A549 (cell line): ENCODE measurements at regions of chr19 and their contacts with region 1.

Region 1: DNA sequence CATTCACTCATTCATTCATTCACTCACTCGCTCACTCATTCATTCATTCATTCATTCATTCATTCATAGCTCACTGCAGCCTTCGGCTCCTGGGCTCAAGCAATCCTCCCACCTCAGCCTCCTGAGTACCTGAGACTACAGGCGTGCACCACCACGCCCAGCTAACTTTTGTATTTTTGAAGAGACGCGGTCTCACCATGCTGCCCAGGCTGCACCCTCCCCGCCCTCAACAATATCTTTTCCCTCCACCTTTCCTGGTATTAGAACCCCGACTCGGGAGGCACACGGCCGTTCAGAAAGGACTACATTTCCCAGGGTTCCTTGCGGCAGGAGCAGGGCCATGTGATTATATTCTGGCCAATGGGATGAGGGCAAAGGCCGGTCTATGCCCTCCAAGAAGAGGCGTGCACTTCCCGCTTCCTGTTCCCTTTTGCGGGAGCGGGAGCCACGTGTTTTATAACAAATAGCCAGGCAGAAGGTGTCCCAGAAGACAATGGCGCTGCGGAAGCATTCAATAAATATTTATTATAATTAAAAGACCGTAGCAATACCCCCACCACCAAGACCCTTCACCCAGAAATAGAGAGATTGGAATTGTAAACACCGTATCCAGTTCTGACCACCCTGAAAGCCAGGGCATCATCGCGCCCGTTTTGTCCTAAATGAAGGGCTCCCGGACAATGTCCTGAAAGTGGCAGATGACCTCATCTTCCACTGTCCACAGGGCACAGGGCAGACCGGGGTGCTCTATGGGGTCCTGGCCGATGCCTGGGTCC is 15.9 kb downstream of the TICAM1 start:
- DNase-seq: peak; percentile 91 to 93
- ATAC-seq: peak; percentile 59 to 77; a peak in 4 of 6 replicates
- H3K4me3 ChIP-seq: no peak overlapping the region
- H3K27ac ChIP-seq: peak overlapping the region; percentile 77 to 89
- H3K4me1 ChIP-seq: peaks cover 17% of the 10 kb centered on the region
- CTCF ChIP-seq: no peak
- EP300 ChIP-seq: no peak
- POLR2A ChIP-seq: no peak
- RAD21 ChIP-seq: no peak

Region 2: DNA sequence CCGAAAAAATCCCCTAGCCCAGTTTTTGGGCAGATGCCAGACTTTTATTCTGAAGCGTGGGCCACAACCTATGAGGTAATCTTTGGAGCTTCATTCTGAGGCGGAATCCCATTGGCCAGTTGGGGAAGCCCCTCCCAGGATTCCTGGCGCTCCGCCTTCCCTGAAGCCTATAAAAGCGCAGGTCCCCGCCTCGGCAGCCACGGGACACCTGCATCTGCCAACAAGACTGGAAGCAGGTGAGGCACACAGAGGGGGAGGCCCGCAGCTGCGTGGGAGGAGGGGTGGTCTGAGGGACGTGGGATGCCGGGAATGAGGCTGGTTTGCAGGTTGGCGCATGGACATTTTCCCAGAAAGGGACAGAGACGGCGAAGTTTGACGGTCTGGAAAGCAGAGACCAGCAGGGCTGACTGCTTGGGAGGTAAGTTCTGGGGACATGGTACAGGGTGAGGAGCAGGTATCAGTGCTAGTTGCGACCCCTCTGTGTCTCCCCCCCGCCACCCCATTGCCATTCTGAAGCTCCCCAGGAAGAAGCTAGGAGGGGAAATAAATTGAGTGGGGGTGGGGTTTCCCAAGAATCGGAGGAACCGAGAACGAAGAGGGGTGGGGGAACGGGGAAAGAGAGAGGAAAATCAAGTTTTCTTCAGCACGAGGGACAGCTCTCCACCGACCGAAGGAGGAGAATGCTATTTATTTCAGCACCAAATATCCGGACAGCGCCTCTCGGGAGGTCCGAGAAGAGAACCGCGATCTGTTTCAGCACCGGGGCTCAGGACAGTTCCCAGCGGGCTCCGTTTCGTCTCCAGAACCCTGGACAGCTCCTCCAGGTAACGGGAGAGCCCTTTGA is 46.5 kb before region 1 on chr19:
- CTCF ChIA-PET with region 1: no interaction called
- POLR2A ChIA-PET with region 1: no interaction called
- DNase-seq: peak; percentile 63 to 76
- ATAC-seq: peak; percentile 79 to 82
- H3K4me3 ChIP-seq: no peak overlapping the region
- H3K27ac ChIP-seq: no peak overlapping the region
- H3K4me1 ChIP-seq: peaks cover 7% of the 10 kb centered on the region; the same call in 1 of the 3 replicates
- CTCF ChIP-seq: no peak
- EP300 ChIP-seq: no peak
- POLR2A ChIP-seq: no peak
- RAD21 ChIP-seq: no peak

Region 3: DNA sequence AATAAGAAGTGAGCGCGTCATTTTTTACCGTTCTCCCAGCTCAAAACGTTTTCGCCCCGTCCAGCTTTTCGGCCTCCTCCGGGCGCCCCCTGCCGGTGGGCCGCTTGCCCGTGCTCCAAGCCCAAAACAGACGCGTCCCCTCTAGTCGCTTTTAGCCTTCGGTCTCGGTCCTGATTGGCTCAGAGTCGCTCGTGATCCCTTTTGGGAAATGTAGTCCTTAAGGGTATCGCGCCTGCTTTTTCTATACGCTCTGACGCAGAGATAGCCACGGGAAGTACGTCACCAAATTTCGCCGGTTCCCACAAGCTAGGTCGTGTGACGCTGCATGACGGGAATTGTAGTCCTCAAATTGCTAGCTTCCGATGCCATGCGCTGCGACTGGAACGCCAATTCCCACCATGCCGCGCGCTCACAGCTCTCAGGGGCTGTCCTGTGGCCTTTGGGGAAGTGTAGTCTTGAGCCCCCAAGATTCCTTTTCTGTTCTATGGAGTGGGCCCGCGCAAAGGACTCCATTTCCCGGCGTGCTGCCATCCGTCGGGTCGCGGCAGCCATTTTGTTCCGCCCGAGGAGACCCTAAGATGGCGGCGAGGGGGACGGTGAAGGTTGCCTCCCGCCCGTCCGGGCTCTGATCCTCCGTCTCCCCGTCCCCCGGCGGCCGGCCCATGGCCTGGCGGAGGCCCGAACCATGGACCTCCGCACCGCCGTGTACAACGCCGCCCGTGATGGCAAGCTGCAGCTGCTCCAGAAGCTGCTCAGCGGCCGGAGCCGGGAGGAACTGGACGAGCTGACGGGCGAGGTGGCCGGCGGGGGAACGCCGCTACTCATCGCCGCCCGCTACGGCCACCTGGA is 24.2 kb before region 1 on chr19 and contains the start of gene FEM1A:
- CTCF ChIA-PET with region 1: interaction called, 27 read pairs
- POLR2A ChIA-PET with region 1: no interaction called
- DNase-seq: peak; percentile 91 to 100
- ATAC-seq: peak; percentile 99
- H3K4me3 ChIP-seq: peak within 1 kb of the TSS; percentile 93
- H3K27ac ChIP-seq: peak within 1 kb of the TSS; percentile 91 to 98
- H3K4me1 ChIP-seq: 0 out of 3 replicates have a peak, but pooled peaks cover 3% of the 10 kb centered on the region
- CTCF ChIP-seq: peak; percentile 91
- EP300 ChIP-seq: no peak
- POLR2A ChIP-seq: peak; percentile 64
- RAD21 ChIP-seq: peak; percentile 76 to 80
- polyA plus RNA-seq, gene FEM1A: 3.2 and 3.5 TPM in 2 replicates

Region 4: DNA sequence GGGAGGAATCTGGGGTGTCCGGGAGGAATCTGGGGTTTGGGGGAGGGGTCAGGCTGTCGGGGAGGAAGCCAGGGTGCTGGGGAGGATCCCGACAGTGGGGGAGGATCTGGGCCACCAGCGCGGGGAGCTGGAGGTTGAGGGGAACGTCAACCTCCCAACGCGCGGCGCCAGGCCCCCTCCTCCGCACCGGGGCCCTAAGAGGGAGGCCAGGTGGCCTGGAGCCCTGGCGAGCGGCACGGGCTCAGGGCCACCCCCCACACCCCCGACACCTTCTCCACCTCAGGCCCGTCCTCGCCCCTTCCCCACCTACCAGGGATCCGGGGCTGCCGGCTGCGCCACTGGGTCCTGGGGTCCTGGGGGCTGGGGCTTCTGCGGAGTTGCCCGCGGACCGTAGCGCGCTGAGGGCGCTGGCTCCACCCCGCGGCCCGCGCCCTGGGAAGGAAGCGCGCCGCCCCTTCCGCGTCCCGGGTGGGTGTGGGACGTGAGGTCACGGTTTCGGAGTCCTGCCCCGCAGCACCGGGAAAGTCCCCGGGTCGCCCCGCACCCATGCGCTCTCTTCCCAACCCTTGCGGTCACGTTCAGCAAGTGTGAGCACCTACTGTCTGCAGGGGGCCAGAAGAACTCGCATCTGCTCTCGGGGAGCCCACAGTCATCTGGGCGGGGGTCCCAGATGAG is 15.8 kb after region 1 on chr19 and contains the start of gene TICAM1:
- CTCF ChIA-PET with region 1: interaction called, 10 read pairs
- POLR2A ChIA-PET with region 1: interaction called, 12 read pairs
- DNase-seq: peak; percentile 48 to 58
- ATAC-seq: peak; percentile 87 to 90
- H3K4me3 ChIP-seq: peak within 1 kb of the TSS; percentile 81
- H3K27ac ChIP-seq: peak within 1 kb of the TSS; percentile 89 to 95
- H3K4me1 ChIP-seq: peaks cover 19% of the 10 kb centered on the region
- CTCF ChIP-seq: no peak
- EP300 ChIP-seq: no peak
- POLR2A ChIP-seq: peak; percentile 67
- RAD21 ChIP-seq: no peak
- polyA plus RNA-seq, gene TICAM1: 0.78 and 2.0 TPM in 2 replicates

Region 5: DNA sequence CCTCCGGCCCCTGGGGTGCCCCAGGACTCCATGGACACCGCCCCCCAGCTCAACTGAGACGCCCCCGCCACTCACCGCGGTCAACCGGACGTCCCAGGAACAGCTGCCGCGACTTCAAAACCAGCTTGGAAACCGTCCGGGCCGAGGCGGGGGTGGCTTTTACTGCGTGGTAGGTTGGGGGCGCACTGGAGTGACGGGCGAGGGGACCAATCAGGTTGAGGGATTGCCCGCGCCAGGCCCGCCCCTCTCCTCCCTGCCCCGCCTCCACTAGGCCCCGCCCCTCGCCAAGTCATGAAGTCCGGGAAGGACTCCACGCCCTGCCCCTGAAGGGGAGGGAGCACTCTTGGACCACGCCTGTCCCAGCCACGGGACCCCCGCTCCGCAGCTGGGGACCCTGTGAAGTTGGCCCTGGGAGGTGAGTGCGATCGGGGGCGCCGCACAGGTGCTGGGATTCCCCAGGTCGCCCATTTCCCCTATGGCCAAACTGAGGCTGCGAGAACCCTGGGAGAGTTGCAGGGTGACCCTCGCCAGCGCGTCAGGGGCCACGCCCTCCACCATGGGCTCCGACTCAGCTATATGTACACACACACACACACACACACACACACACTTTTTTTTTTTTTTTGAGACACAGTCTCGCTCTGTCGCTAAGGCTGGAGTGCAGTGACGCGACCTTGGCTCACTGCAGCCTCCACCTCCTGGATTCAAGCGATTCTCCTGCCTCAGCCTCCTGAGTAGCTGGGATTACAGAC is 52.1 kb after region 1 on chr19 and contains the start of gene PLIN3:
- CTCF ChIA-PET with region 1: interaction called, 42 read pairs
- POLR2A ChIA-PET with region 1: interaction called, 3 read pairs
- DNase-seq: peak; percentile 93 to 96
- ATAC-seq: peak; percentile 84 to 88
- H3K4me3 ChIP-seq: peak within 1 kb of the TSS; percentile 97
- H3K27ac ChIP-seq: peak within 1 kb of the TSS; percentile 90 to 94
- H3K4me1 ChIP-seq: peaks cover 37% of the 10 kb centered on the region
- CTCF ChIP-seq: no peak
- EP300 ChIP-seq: no peak
- POLR2A ChIP-seq: peak; percentile 25; the same call in 1 of the 2 replicates
- RAD21 ChIP-seq: no peak
- polyA plus RNA-seq, gene PLIN3: 28.4 and 30.1 TPM in 2 replicates

Region 6: DNA sequence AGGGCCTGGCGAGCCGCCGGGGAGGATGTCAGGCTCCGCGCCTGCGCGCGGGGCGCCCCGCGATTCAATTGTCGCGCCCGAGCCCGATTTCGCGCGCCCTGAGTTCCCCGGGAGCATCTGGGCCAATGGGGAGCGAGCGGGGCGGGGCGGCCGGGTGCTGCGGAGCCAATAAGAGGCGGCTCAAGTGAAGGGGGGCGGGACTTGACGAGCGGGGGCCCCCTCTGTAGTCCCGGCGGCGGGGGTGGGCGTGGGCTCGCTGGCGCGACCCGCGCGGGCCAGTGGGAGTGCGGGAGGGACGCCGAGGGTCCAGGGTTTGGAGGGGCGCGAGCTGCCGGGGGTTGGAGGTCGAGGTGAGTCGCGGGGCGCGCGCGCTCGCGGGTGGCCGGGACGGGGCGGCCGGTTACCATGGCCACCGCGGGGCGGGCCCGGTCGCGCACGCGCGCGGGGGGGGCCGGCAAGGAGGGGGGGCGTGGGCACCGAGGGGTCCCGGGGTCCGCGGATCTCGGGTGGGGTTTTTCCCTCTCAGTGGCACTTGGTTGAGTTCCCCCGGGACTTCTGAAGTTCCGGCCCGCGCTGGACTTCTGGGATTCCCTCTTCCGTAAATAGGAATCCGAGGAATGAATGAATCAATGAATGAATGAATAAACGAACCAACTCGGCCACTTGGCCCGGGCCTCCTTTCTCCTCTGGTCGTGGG is 94.4 kb after region 1 on chr19:
- CTCF ChIA-PET with region 1: interaction called, 86 read pairs
- POLR2A ChIA-PET with region 1: interaction called, 8 read pairs
- DNase-seq: peak; percentile 85 to 91
- ATAC-seq: peak; percentile 74 to 78
- H3K4me3 ChIP-seq: peak overlapping the region; percentile 85
- H3K27ac ChIP-seq: peak overlapping the region; percentile 93 to 95
- H3K4me1 ChIP-seq: peaks cover 45% of the 10 kb centered on the region
- CTCF ChIP-seq: no peak
- EP300 ChIP-seq: no peak
- POLR2A ChIP-seq: no peak
- RAD21 ChIP-seq: no peak